Vagina (tissue), 2 donors: ENCODE measurements at regions of chr22 and their contacts with region 1.

Region 1: GRCh38 chr22:34198976-34199375 is 278.7 kb upstream of the LARGE1 start:
- DNase-seq: no peak
- H3K4me3 ChIP-seq: no peak overlapping the region
- H3K27ac ChIP-seq: no peak overlapping the region
- H3K4me1 ChIP-seq: no peaks in the 10 kb centered on the region
- H3K27me3 ChIP-seq: no peaks in the 10 kb centered on the region
- CTCF ChIP-seq: no peak
- POLR2A ChIP-seq: no peak

Region 2: GRCh38 chr22:33785283-33785968 is 413.6 kb before region 1 on chr22:
- intact Hi-C with region 1: no loop called
- DNase-seq: no peak
- H3K4me3 ChIP-seq: no peak overlapping the region
- H3K27ac ChIP-seq: no peak overlapping the region
- H3K4me1 ChIP-seq: peaks cover 25% of the 10 kb centered on the region
- H3K27me3 ChIP-seq: no peaks in the 10 kb centered on the region
- CTCF ChIP-seq: no peak
- POLR2A ChIP-seq: no peak

Region 3: DNA sequence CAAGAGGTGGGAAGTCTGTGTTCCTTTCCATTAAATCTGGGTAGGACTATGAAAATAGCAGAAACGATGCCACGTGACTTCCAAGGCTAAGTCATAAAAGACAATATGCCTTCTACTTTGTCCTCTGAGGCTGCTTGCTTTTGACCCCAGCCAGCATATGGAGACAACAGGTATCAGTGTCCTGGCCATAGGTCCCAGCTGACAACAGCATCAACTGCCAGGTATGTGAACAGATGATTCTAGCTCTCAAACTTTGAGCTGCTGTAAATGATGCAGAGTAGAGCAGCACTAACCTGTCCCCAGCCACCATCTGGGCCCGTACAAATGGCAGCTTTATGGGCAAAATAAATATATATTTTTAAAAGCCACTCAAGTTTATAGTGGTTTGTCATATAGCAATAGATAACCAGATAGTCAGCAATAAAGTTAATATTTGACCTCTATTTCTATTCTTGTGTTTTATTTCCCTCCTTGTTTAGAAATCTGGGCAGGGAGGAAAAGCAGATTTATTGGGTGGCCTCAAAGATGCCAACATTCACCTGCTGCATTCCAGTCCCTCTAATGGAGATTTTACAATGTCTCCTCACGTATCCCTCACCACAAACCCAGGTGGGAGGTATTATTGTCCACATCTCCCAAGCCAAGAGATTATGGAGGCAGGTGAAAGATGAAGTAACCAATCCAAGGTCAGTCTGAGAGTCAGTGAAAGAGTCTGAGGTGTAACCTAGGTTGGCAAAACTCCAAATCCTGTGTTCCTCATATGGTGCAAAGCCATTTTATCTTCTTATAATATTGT is 69.1 kb before region 1 on chr22:
- intact Hi-C with region 1: loop called (anchors 10 kb)
- DNase-seq: no peak
- H3K4me3 ChIP-seq: no peak overlapping the region
- H3K27ac ChIP-seq: no peak overlapping the region
- H3K4me1 ChIP-seq: no peaks in the 10 kb centered on the region
- H3K27me3 ChIP-seq: no peaks in the 10 kb centered on the region
- CTCF ChIP-seq: no peak
- POLR2A ChIP-seq: no peak

Region 4: DNA sequence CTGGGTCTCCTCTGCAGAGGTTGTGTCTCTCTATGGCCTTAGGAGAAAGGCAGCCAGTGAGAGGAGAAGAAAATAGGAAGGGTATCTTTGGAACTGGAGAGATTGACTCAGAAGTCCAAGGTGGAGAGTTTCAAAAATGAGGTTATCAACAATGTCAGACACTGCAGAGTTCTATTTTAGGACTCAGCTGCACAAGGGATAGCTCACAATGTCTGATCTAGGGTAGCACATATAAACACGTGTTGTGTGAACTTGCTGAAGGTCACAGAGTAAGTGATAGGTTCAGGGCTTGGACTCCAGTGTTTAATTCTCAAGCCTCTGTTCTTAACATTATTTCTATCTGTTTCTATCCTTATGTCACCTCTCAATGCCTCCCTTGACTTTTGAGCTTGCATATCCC is 26.3 kb after region 1 on chr22:
- intact Hi-C with region 1: loop called (anchors 2 kb)
- DNase-seq: no peak
- H3K4me3 ChIP-seq: no peak overlapping the region
- H3K27ac ChIP-seq: no peak overlapping the region
- H3K4me1 ChIP-seq: no peaks in the 10 kb centered on the region
- H3K27me3 ChIP-seq: no peaks in the 10 kb centered on the region
- CTCF ChIP-seq: no peak
- POLR2A ChIP-seq: no peak